CD8-positive, alpha-beta T cell (primary cell): ENCODE measurements at regions of chr5 and their contacts with region 1.

Region 1: DNA sequence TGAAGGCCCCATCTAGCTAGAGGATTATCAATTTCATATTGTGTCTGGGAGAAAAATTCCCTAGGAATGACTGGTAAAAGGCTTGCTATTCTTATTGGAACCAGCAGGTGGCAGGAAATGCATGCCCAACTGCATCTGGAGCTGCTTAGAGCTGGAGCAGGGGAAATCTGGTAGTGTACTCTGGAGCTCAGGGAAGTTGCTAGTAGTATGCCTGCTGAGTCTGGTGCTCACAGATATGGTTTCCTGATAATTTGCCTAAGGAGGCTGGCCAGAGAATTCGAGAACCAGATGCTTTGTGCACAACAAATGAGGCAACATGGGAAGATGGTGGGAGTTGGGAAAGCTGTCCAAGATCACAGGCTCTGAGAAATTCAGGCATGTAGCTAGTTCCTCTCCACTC is 53.7 kb downstream of the G3BP1 start:
- DNase-seq: peak in 5 of 9 experiments; percentile 25 to 62 (median 33)
- ATAC-seq: peak; percentile 31
- H3K4me3 ChIP-seq: no peak overlapping the region
- H3K4me3 Mint-ChIP-seq: no peak overlapping the region
- H3K27ac ChIP-seq: no peak overlapping the region
- H3K27ac Mint-ChIP-seq: no peak overlapping the region
- H3K4me1 ChIP-seq: no peaks in the 10 kb centered on the region
- H3K4me1 Mint-ChIP-seq: peaks cover 4% of the 10 kb centered on the region
- H3K27me3 ChIP-seq: no peaks in the 10 kb centered on the region
- H3K27me3 Mint-ChIP-seq: no peaks in the 10 kb centered on the region
- CTCF ChIP-seq: peak; percentile 66

Region 2: DNA sequence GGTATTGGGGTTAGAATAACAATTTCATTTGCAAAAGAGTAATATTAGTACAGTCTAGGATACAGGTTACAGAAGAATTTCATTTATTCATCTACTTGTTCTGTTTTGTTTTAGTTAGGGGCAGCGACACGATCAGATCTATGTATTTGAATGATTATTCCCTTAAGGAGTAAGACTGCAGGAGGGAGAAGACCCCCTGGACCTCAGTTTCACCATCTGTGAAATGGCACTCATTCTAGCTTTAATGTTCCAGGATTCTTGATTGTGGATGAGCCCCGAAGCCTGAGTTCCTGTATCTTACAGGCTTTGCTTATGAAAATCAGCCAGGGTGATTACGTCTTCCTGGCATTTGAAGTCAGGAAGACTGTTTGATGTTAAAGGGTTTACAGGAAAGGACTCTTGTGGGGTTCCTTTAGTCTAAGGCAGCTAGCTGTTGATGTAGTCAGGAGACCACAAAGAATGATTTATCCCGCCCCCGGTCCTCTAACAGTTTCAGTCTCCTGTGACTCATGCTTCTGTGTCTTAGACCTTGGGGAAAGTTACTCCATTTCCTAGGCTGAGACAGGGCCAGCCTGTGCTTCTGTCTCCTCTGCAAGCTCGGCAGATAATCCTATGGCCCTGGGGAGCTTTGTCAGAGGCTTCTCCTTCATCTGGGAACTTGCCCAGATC is 1035.4 kb before region 1 on chr5:
- CTCF ChIA-PET with region 1: no interaction called
- POLR2A ChIA-PET with region 1: no interaction called
- intact Hi-C with region 1: no loop called
- DNase-seq: peak in 8 of 9 experiments; percentile 35 to 79 (median 65)
- ATAC-seq: peak; percentile 95
- H3K4me3 ChIP-seq: peak overlapping the region in 1 of 2 experiments; percentile 24
- H3K4me3 Mint-ChIP-seq: peak overlapping the region; percentile 57
- H3K27ac ChIP-seq: peak overlapping the region in 1 of 2 experiments; percentile 50
- H3K27ac Mint-ChIP-seq: peak overlapping the region; percentile 52
- H3K4me1 ChIP-seq: peaks cover 14% of the 10 kb centered on the region
- H3K4me1 Mint-ChIP-seq: peaks cover 43% of the 10 kb centered on the region
- H3K27me3 ChIP-seq: no peaks in the 10 kb centered on the region
- H3K27me3 Mint-ChIP-seq: no peaks in the 10 kb centered on the region
- CTCF ChIP-seq: no peak

Region 3: DNA sequence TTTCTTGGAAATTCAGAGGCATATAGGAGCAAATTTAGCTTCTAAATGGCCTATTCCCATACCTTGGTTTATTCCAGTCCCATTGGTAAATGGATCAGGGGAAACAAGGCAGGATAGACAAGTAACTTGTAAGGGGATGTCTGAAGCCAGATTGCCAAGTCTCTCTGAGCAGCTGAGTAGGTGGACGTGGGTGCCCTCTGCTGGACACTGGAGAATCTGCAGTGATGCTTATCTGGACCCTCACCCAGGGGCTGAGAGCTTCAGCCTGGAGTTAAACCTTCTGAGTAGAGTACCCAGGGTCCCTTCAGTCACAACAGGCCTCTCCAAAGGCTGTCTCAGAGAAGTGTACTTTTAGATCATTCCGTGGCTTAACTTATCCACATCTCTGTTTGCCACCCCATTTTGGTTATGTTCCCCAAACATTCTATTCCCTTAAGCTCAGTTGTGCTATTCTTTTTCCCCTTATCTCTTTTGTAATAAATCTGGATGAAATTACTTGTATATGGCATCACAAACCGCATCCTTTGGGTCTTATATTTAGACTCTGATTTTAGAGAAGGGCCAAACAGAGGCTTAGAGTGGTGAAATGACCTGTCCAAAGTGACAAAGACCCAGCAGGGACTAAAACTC is 317.5 kb after region 1 on chr5:
- CTCF ChIA-PET with region 1: interaction called, 227 read pairs
- POLR2A ChIA-PET with region 1: interaction called, 14 read pairs
- intact Hi-C with region 1: loop called (anchors 1 kb)
- DNase-seq: peak; percentile 41 to 77 (median 60)
- ATAC-seq: peak; percentile 69
- H3K4me3 ChIP-seq: no peak overlapping the region
- H3K4me3 Mint-ChIP-seq: no peak overlapping the region
- H3K27ac ChIP-seq: no peak overlapping the region
- H3K27ac Mint-ChIP-seq: no peak overlapping the region
- H3K4me1 ChIP-seq: no peaks in the 10 kb centered on the region
- H3K4me1 Mint-ChIP-seq: no peaks in the 10 kb centered on the region
- H3K27me3 ChIP-seq: no peaks in the 10 kb centered on the region
- H3K27me3 Mint-ChIP-seq: no peaks in the 10 kb centered on the region
- CTCF ChIP-seq: peak; percentile 93

Region 4: GRCh38 chr5:152349683-152350526 is 524.5 kb after region 1 on chr5:
- CTCF ChIA-PET with region 1: interaction called, 12 read pairs
- POLR2A ChIA-PET with region 1: no interaction called
- intact Hi-C with region 1: no loop called
- DNase-seq: peak in 2 of 9 experiments; percentile 23
- ATAC-seq: no peak
- H3K4me3 ChIP-seq: no peak overlapping the region
- H3K4me3 Mint-ChIP-seq: no peak overlapping the region
- H3K27ac ChIP-seq: no peak overlapping the region
- H3K27ac Mint-ChIP-seq: no peak overlapping the region
- H3K4me1 ChIP-seq: no peaks in the 10 kb centered on the region
- H3K4me1 Mint-ChIP-seq: no peaks in the 10 kb centered on the region
- H3K27me3 ChIP-seq: no peaks in the 10 kb centered on the region
- H3K27me3 Mint-ChIP-seq: peaks cover 4% of the 10 kb centered on the region
- CTCF ChIP-seq: peak; percentile 35

Region 5: GRCh38 chr5:152505442-152506042 is 680.1 kb after region 1 on chr5:
- CTCF ChIA-PET with region 1: interaction called, 5 read pairs
- POLR2A ChIA-PET with region 1: no interaction called
- intact Hi-C with region 1: loop called in 1 of 2 experiments (anchors 5 kb)
- DNase-seq: peak in 5 of 9 experiments; percentile 5 to 61 (median 30)
- ATAC-seq: no peak
- H3K4me3 ChIP-seq: no peak overlapping the region
- H3K4me3 Mint-ChIP-seq: no peak overlapping the region
- H3K27ac ChIP-seq: no peak overlapping the region
- H3K27ac Mint-ChIP-seq: no peak overlapping the region
- H3K4me1 ChIP-seq: no peaks in the 10 kb centered on the region
- H3K4me1 Mint-ChIP-seq: no peaks in the 10 kb centered on the region
- H3K27me3 ChIP-seq: no peaks in the 10 kb centered on the region
- H3K27me3 Mint-ChIP-seq: peaks cover 21% of the 10 kb centered on the region
- CTCF ChIP-seq: no peak